ENCODE measurements at regions of chr3 and their contacts with region 1.

Region 1: DNA sequence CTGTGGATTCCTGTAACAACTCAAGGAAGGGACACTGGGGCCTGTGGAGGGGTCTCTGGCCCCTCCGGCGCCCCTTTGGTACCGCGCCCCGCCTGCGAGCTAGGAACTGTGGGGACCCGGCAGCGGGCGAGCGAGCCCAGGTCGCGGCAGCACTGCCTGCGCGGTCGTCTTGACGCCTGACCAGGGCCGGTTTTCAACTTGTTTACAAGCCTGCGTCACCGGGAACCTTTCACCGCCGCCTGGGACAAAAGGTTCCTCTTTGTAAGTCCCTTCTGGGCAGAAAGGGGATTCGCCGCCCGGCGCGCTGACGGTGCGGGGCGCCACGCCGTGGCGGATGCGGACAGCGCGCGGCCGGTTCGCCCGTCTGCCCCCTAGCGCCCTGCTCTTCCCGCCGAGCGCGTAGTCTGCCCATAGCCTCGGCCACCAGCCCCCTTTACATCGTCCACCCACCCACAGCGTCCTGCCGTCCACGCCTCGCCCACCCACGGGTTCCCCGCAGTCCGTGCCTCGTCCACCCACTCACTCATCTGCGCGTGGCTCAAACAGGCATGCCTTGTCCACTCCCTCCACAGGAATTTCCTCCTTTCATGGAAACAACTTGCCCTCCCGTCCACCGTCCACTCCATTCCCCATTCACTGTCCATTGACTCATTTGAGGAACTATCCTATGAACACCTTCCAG is 5.5 kb upstream of the CFAP100 start:
- DNase-seq: peak; percentile 94
- ATAC-seq: peak; percentile 98

Region 2: GRCh38 chr3:126134219-126134975 is 254.9 kb before region 1 on chr3:
- intact Hi-C with region 1: loop called (anchors 5 kb)
- DNase-seq: peak; percentile 71
- ATAC-seq: peak; percentile 87

Region 3: GRCh38 chr3:126245811-126246727 is 143.2 kb before region 1 on chr3:
- intact Hi-C with region 1: loop called (anchors 5 kb)
- DNase-seq: peak; percentile 63
- ATAC-seq: peak; percentile 92